Activated naive CD4-positive, alpha-beta T cell treated with anti-CD3 and anti-CD28 coated beads for 36 hours (primary cell): ENCODE measurements at regions of chr10 and their contacts with region 1.

Region 1: GRCh38 chr10:112471878-112472487 is 25.0 kb downstream of the VTI1A start:
- DNase-seq: no peak
- H3K4me3 Mint-ChIP-seq: no peak overlapping the region
- H3K27ac Mint-ChIP-seq: no peak overlapping the region
- H3K4me1 Mint-ChIP-seq: peaks cover 7% of the 10 kb centered on the region
- H3K27me3 Mint-ChIP-seq: no peaks in the 10 kb centered on the region

Region 2: GRCh38 chr10:112183329-112184051 is 288.5 kb before region 1 on chr10 and contains the start of gene GPAM:
- CTCF ChIA-PET with region 1: interaction called, 4 read pairs
- intact Hi-C with region 1: loop called (anchors 2 kb)
- DNase-seq: peak; percentile 97
- H3K4me3 Mint-ChIP-seq: peak within 1 kb of the TSS; percentile 85
- H3K27ac Mint-ChIP-seq: peak within 1 kb of the TSS; percentile 74
- H3K4me1 Mint-ChIP-seq: peaks cover 20% of the 10 kb centered on the region
- H3K27me3 Mint-ChIP-seq: no peaks in the 10 kb centered on the region
- total RNA-seq, gene GPAM: 7.3 to 8.1 TPM

Region 3: DNA sequence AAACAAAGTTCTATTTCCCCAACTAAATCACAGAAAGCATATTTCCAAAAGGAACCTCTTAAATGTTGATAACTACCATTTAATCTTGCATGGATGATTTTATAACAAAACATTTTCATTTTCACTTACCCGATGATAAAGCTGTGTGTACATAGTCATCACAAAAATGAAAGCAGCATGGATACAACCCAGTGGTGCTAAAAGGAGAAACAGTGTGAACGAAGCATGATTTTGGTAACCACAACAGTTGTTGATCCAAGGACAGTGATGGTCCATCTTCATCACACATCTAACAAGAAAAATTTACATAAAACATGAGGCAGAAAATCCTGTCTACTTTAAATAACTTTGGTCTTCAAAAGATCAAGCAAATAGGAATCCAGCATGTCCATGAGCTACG is 29.9 kb before region 1 on chr10:
- CTCF ChIA-PET with region 1: interaction called, 28 read pairs
- intact Hi-C with region 1: loop called (anchors 1 kb)
- DNase-seq: no peak
- H3K4me3 Mint-ChIP-seq: no peak overlapping the region
- H3K27ac Mint-ChIP-seq: peak overlapping the region; percentile 63
- H3K4me1 Mint-ChIP-seq: peaks cover 44% of the 10 kb centered on the region
- H3K27me3 Mint-ChIP-seq: no peaks in the 10 kb centered on the region

Region 4: GRCh38 chr10:113108212-113108835 is 636.3 kb after region 1 on chr10:
- CTCF ChIA-PET with region 1: no interaction called
- intact Hi-C with region 1: loop called (anchors 1 kb)
- DNase-seq: peak; percentile 53
- H3K4me3 Mint-ChIP-seq: no peak overlapping the region
- H3K27ac Mint-ChIP-seq: no peak overlapping the region
- H3K4me1 Mint-ChIP-seq: no peaks in the 10 kb centered on the region
- H3K27me3 Mint-ChIP-seq: peaks cover 11% of the 10 kb centered on the region

Region 5: GRCh38 chr10:113454341-113455061 is 982.5 kb after region 1 on chr10:
- CTCF ChIA-PET with region 1: no interaction called
- intact Hi-C with region 1: loop called (anchors 10 kb)
- DNase-seq: peak; percentile 42
- H3K4me3 Mint-ChIP-seq: no peak overlapping the region
- H3K27ac Mint-ChIP-seq: no peak overlapping the region
- H3K4me1 Mint-ChIP-seq: no peaks in the 10 kb centered on the region
- H3K27me3 Mint-ChIP-seq: peaks cover 14% of the 10 kb centered on the region